Cardiac septum (tissue), 1 donor: ENCODE measurements at regions of chr4 and their contacts with region 1.

Region 1: GRCh38 chr4:7365462-7366179 is 69.1 kb downstream of the PSAPL1 start:
- DNase-seq: no peak

Region 2: DNA sequence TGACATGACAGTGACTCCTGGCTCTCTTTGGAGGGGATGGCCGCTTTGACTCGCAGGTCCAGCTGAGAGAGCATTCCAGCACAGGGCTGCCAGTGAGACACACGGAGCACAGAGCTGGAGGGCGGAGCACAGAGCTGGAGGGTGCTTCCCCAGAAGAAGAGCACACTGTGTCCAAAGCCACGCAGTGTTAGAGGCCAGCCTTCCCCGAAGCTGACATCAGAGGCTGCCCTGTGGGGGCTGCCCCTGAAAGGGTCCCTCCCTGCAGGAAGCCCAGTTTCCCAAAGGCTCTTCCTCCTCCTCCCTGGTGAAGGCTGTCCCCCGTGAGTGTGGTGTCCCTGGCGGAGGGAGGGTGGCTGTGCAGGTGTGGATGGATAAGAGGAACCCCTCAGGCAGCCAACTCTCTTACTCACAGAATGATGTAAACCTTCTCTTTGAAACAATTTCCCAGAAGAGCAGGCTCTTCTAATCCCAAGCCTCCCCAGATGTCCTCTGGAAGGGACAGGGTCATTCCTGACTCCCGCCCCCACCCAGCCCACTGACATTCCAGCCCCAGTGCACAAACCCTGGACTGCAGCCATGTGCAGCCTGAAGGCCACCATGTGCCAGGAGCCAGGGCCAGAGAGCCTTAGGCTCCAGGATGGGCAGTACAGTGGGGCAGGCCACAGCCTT is 15.7 kb after region 1 on chr4:
- intact Hi-C with region 1: loop called (anchors 2 kb)
- DNase-seq: peak; percentile 78